Psoas muscle (tissue), 8 donors: ENCODE measurements at regions of chr5 and their contacts with region 1.

Region 1: GRCh38 chr5:128083033-128083810 is at the start of gene SLC12A2:
- DNase-seq: peak; percentile 92 to 96
- ATAC-seq: peak; percentile 87 to 90 (median 88)
- H3K4me3 ChIP-seq: peak within 1 kb of the TSS; percentile 89
- H3K27ac ChIP-seq: peak within 1 kb of the TSS; percentile 96
- H3K4me1 ChIP-seq: peaks cover 31% of the 10 kb centered on the region
- H3K27me3 ChIP-seq: no peaks in the 10 kb centered on the region
- CTCF ChIP-seq: no peak
- total RNA-seq, gene SLC12A2: 11.7 to 25.8 (median 16.3) TPM

Region 2: DNA sequence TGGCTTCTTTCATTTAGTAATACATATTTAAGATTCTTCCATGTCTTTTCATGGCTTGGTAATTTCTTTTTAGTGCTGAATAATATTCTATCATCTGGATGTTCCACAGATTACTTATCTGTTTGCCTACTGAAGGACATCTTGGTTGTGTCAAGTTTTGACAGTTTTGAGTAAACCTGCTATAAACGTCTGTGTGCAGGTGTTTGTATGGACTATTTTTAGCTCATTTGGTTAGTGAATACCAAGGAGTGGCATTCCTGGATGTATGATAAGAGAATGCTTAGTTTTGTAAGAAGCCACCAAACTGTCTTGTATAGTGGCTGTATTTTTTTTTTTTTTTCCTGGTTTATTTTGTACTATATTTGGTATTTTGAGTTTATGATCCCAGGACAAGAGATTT is 527.4 kb before region 1 on chr5:
- intact Hi-C with region 1: loop called in 1 of 2 experiments (anchors 5 kb)
- DNase-seq: no peak
- ATAC-seq: no peak
- H3K4me3 ChIP-seq: no peak overlapping the region
- H3K27ac ChIP-seq: no peak overlapping the region
- H3K4me1 ChIP-seq: peaks cover 33% of the 10 kb centered on the region
- H3K27me3 ChIP-seq: no peaks in the 10 kb centered on the region
- CTCF ChIP-seq: no peak

Region 3: GRCh38 chr5:127757576-127757975 is 325.6 kb before region 1 on chr5:
- intact Hi-C with region 1: loop called (anchors 10 kb)
- DNase-seq: no peak
- ATAC-seq: peak; percentile 65 to 95 (median 87)
- H3K4me3 ChIP-seq: no peak overlapping the region
- H3K27ac ChIP-seq: no peak overlapping the region
- H3K4me1 ChIP-seq: peaks cover 11% of the 10 kb centered on the region
- H3K27me3 ChIP-seq: no peaks in the 10 kb centered on the region
- CTCF ChIP-seq: peak; percentile 56

Region 4: DNA sequence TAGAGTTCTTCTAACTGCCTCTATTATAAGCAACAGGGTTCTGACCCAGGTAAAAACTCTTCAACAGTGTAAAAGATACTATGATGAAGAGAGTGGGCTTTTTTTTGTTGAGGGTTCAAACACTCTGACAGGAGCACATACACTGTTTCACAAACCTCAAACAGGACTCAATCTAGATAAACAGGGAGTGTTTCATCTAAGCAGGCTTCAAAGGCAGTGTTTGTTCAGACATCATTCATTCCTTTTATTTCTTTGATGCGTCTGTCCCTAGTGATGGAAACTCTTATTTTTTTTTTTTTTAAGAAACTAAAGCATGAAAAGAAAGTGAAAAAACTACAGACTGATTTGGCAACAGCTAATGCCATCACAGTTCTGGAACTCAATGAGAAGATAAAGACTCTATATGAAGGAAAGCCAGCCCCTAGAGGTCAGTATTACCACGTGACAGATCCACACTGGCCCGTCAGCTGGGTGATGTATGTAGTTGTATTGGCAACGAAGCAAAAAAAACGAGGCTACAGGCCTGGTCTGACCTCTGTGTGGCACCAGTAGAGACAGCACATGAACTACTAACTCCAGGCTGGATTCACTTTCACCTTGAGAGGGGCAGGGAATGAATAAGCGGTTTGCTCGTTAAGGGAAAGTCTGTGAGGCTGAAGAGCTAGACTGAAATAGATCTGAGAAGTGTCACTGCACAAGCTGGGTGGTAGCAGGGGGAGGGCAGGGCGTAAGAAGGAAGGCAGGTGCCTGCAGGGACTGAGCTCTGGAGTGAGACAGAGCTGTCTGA is 207.8 kb before region 1 on chr5:
- intact Hi-C with region 1: loop called in 1 of 2 experiments (anchors 5 kb)
- DNase-seq: peak; percentile 28 to 77
- ATAC-seq: peak; percentile 87 to 95 (median 93)
- H3K4me3 ChIP-seq: peak overlapping the region; percentile 37
- H3K27ac ChIP-seq: peak overlapping the region; percentile 74
- H3K4me1 ChIP-seq: peaks cover 47% of the 10 kb centered on the region
- H3K27me3 ChIP-seq: no peaks in the 10 kb centered on the region
- CTCF ChIP-seq: peak; percentile 32

Region 5: GRCh38 chr5:128062172-128062746 is 21.0 kb before region 1 on chr5:
- intact Hi-C with region 1: no loop called
- DNase-seq: no peak
- ATAC-seq: no peak
- H3K4me3 ChIP-seq: no peak overlapping the region
- H3K27ac ChIP-seq: no peak overlapping the region
- H3K4me1 ChIP-seq: no peaks in the 10 kb centered on the region
- H3K27me3 ChIP-seq: no peaks in the 10 kb centered on the region
- CTCF ChIP-seq: no peak

Region 6: DNA sequence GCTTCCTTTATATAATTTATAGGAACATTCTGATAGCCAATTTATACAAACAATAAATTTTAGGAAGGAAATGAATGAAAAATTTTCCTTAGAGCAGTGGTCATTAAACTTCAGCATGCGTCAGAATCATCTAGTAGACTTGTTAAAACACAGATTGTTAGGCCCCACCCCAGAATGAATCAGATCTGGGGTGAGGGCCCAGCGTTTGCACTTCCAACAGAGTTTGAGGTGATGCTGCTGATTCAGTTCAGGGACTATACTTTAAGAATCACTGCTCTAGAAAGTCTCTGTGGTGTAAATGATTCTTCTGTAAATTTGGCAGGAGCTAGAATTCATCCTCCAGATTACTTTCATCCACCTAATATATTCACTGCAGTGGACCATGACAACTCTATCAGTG is 80.8 kb after region 1 on chr5:
- intact Hi-C with region 1: no loop called
- DNase-seq: no peak
- ATAC-seq: no peak
- H3K4me3 ChIP-seq: no peak overlapping the region
- H3K27ac ChIP-seq: no peak overlapping the region
- H3K4me1 ChIP-seq: no peaks in the 10 kb centered on the region
- H3K27me3 ChIP-seq: no peaks in the 10 kb centered on the region
- CTCF ChIP-seq: no peak